ENCODE measurements at regions of chr11 and their contacts with region 1.

Region 1: DNA sequence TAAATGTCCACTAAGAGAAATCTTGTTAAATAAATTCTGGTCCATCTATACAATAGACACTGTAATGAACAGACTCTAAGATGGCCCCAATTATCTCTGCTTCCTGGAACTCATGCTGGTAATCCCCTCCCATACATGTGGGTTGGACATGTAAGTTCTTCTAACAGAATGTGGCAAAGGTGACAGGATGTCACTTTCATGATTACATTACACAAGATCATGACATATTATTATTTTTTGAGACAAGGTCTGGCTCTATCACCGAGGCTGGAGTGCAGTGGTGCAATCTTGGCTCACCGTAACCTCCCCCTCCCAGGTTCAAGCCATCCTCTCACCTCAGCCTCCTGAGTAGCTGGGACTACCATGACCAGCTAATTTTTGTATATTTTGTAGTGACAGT is 14.6 kb upstream of the NDUFC2 start:
- DNase-seq: no peak
- H3K4me3 ChIP-seq: no peak overlapping the region
- H3K4me3 Mint-ChIP-seq: no peak overlapping the region
- H3K27ac Mint-ChIP-seq: no peak overlapping the region
- H3K4me1 ChIP-seq: peaks cover 21% of the 10 kb centered on the region
- H3K4me1 Mint-ChIP-seq: peaks cover 32% of the 10 kb centered on the region
- H3K27me3 ChIP-seq: no peaks in the 10 kb centered on the region
- H3K27me3 Mint-ChIP-seq: no peaks in the 10 kb centered on the region
- CTCF ChIP-seq: no peak

Region 2: GRCh38 chr11:77800449-77800848 is 293.8 kb before region 1 on chr11:
- CTCF ChIA-PET with region 1: no interaction called
- POLR2A ChIA-PET with region 1: no interaction called
- intact Hi-C with region 1: loop called (anchors 1 kb)
- DNase-seq: no peak
- H3K4me3 ChIP-seq: no peak overlapping the region
- H3K4me3 Mint-ChIP-seq: peak overlapping the region; percentile 64
- H3K27ac Mint-ChIP-seq: peak overlapping the region; percentile 94
- H3K4me1 ChIP-seq: peaks cover 39% of the 10 kb centered on the region
- H3K4me1 Mint-ChIP-seq: peaks cover 34% of the 10 kb centered on the region
- H3K27me3 ChIP-seq: no peaks in the 10 kb centered on the region
- H3K27me3 Mint-ChIP-seq: no peaks in the 10 kb centered on the region
- CTCF ChIP-seq: no peak

Region 3: GRCh38 chr11:77865805-77866204 is 228.4 kb before region 1 on chr11:
- CTCF ChIA-PET with region 1: no interaction called
- POLR2A ChIA-PET with region 1: no interaction called
- intact Hi-C with region 1: no loop called
- DNase-seq: no peak
- H3K4me3 ChIP-seq: no peak overlapping the region
- H3K4me3 Mint-ChIP-seq: no peak overlapping the region
- H3K27ac Mint-ChIP-seq: no peak overlapping the region
- H3K4me1 ChIP-seq: no peaks in the 10 kb centered on the region
- H3K4me1 Mint-ChIP-seq: no peaks in the 10 kb centered on the region
- H3K27me3 ChIP-seq: no peaks in the 10 kb centered on the region
- H3K27me3 Mint-ChIP-seq: no peaks in the 10 kb centered on the region
- CTCF ChIP-seq: no peak

Region 4: GRCh38 chr11:78045851-78046485 is 48.3 kb before region 1 on chr11:
- CTCF ChIA-PET with region 1: interaction called, 10 read pairs
- POLR2A ChIA-PET with region 1: interaction called, 4 read pairs
- intact Hi-C with region 1: loop called (anchors 1 kb)
- DNase-seq: peak; percentile 80 to 97
- H3K4me3 ChIP-seq: peak overlapping the region; percentile 28
- H3K4me3 Mint-ChIP-seq: peak overlapping the region; percentile 75
- H3K27ac Mint-ChIP-seq: peak overlapping the region; percentile 1
- H3K4me1 ChIP-seq: peaks cover 15% of the 10 kb centered on the region
- H3K4me1 Mint-ChIP-seq: peaks cover 23% of the 10 kb centered on the region
- H3K27me3 ChIP-seq: no peaks in the 10 kb centered on the region
- H3K27me3 Mint-ChIP-seq: no peaks in the 10 kb centered on the region
- CTCF ChIP-seq: peak; percentile 99

Region 5: DNA sequence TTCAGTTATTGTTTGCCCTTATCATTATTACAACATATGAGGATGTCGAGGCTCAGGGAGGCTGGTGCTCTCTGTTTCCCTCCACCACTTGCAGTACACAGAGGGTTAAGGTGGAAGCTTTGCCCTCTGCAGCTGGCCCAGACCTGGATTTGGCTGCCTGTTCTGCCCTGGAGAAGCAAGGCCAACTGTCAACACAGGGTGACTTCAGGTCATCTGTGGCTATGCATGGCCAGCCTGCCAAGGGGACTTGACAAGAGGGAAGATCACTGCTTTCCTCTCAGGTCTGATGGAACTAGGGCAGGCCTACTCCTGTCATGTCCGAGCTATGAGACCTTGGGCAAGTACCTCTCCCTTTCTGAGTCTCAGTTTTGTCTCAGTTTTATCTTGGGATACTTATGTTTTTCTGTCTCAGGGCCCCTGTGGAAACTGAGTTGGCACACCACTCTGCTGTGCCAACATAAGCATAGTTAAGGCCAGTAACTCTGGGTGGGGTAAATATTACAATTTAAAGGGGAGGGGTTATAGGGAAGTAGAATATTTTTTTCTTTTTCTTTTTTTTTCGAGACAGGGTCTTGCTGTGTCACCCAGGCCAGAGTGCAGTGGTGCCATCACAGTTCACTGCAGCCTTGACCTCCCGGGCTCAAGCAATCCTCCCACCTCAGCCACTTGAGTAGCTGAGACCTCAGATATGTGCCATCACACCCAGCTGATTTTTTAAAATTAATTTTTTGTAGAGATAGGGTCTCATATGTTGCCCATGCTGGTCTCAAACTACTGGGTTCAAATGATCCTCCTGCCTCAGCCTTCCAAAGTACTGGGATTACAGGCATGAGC is 32.9 kb before region 1 on chr11:
- CTCF ChIA-PET with region 1: interaction called, 3 read pairs
- POLR2A ChIA-PET with region 1: no interaction called
- intact Hi-C with region 1: loop called (anchors 1 kb)
- DNase-seq: peak; percentile 52 to 65
- H3K4me3 ChIP-seq: no peak overlapping the region
- H3K4me3 Mint-ChIP-seq: no peak overlapping the region
- H3K27ac Mint-ChIP-seq: peak overlapping the region; percentile 70
- H3K4me1 ChIP-seq: peaks cover 31% of the 10 kb centered on the region
- H3K4me1 Mint-ChIP-seq: peaks cover 15% of the 10 kb centered on the region
- H3K27me3 ChIP-seq: no peaks in the 10 kb centered on the region
- H3K27me3 Mint-ChIP-seq: no peaks in the 10 kb centered on the region
- CTCF ChIP-seq: no peak

Region 6: GRCh38 chr11:78127401-78127800 is 33.2 kb after region 1 on chr11:
- CTCF ChIA-PET with region 1: no interaction called
- POLR2A ChIA-PET with region 1: no interaction called
- intact Hi-C with region 1: loop called (anchors 2 kb)
- DNase-seq: no peak
- H3K4me3 ChIP-seq: no peak overlapping the region
- H3K4me3 Mint-ChIP-seq: no peak overlapping the region
- H3K27ac Mint-ChIP-seq: no peak overlapping the region
- H3K4me1 ChIP-seq: peaks cover 7% of the 10 kb centered on the region; the same call in 1 of the 2 replicates
- H3K4me1 Mint-ChIP-seq: peaks cover 6% of the 10 kb centered on the region
- H3K27me3 ChIP-seq: no peaks in the 10 kb centered on the region
- H3K27me3 Mint-ChIP-seq: no peaks in the 10 kb centered on the region
- CTCF ChIP-seq: no peak

Region 7: DNA sequence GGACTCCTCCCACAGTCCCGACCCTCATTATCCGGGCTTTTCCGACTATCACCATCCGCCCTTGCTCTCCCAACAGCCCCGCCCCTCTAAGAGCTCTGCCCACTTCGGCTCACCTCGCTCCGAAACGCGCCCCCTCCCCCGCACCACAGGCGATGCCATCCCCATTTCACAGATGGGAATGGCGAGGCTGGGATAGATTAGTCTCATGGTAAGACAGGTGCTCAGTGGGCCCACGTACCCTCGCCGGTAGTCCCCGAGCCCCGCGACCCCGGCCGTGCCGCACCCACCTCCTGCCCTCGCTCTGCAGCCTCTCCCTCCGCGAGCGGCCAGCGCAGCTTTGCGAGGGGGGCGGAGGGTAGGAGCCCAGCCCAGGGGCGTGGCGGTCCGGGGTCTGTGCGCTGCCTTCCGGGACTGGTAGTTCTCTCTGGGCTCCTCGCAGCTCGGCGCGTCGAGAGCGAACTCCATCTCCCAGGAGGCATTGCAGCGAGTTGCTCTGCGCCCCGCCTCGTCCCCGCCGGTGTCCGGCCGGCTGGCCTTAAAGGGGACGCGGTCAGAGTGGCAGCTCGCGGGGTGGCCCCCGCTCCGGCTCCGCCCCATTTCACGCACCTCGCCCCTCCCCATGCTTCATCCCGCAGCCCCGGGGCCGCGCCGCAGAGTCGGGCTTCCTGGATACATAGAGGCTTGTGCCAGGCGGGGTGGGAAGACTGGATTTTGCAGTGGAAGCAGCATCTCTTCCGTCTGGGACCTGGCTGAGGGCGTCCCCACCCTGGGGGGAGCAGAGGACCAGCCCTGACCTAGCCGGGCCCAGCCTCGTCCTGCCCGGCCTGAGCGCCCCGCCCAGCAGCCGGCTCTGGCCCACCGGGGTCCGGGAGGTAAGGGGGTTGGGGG is 94.3 kb after region 1 on chr11 and contains the starts of genes KCTD21 and USP35:
- CTCF ChIA-PET with region 1: interaction called, 5 read pairs
- POLR2A ChIA-PET with region 1: no interaction called
- intact Hi-C with region 1: loop called (anchors 1 kb)
- DNase-seq: peak; percentile 99 to 100
- H3K4me3 ChIP-seq: peak within 1 kb of the TSS; percentile 82
- H3K4me3 Mint-ChIP-seq: peak within 1 kb of the TSS; percentile 98
- H3K27ac Mint-ChIP-seq: peak within 1 kb of the TSS; percentile 84
- H3K4me1 ChIP-seq: peaks cover 28% of the 10 kb centered on the region
- H3K4me1 Mint-ChIP-seq: peaks cover 37% of the 10 kb centered on the region
- H3K27me3 ChIP-seq: no peaks in the 10 kb centered on the region
- H3K27me3 Mint-ChIP-seq: no peaks in the 10 kb centered on the region
- CTCF ChIP-seq: no peak
- total RNA-seq, gene KCTD21: 6.4 and 10.4 TPM in 2 replicates
- total RNA-seq, gene USP35: 10.7 and 11.3 TPM in 2 replicates

Region 8: DNA sequence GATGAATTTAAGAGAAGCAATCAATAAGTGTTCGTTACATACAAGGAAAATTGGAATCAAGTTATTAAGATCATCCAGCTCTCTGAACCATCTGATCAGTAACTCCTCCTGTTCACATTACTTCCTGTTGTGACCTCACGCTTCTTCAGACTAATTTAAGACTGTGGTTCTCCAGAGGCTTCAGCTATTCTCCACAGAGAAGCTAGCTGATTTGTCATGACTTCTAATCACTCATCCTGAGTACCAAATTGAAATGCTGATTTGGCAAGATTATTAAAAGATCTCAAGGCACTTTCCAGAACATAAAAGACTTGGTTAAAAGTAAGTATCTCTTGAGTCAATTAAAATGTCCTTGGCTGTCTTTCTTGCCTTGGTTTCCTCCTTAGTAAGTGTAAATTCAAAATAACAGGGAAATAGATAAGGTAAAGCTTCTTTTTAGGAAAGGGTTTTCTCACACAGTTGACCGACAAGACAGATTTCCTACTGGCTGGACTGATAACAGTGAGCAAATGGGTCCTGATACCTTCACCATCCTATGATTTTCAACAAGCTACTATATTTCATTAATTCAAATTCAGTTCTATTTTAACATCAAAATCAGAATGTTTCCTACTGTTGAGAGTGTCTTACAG is 284.9 kb after region 1 on chr11:
- CTCF ChIA-PET with region 1: no interaction called
- POLR2A ChIA-PET with region 1: no interaction called
- intact Hi-C with region 1: no loop called
- DNase-seq: no peak
- H3K4me3 ChIP-seq: no peak overlapping the region
- H3K4me3 Mint-ChIP-seq: peak overlapping the region; percentile 64
- H3K27ac Mint-ChIP-seq: peak overlapping the region; percentile 93
- H3K4me1 ChIP-seq: peaks cover 75% of the 10 kb centered on the region
- H3K4me1 Mint-ChIP-seq: peaks cover 60% of the 10 kb centered on the region
- H3K27me3 ChIP-seq: no peaks in the 10 kb centered on the region
- H3K27me3 Mint-ChIP-seq: no peaks in the 10 kb centered on the region
- CTCF ChIP-seq: no peak

Region 9: GRCh38 chr11:78586452-78587046 is 492.3 kb after region 1 on chr11:
- CTCF ChIA-PET with region 1: no interaction called
- POLR2A ChIA-PET with region 1: no interaction called
- intact Hi-C with region 1: no loop called
- DNase-seq: no peak
- H3K4me3 ChIP-seq: no peak overlapping the region
- H3K4me3 Mint-ChIP-seq: no peak overlapping the region
- H3K27ac Mint-ChIP-seq: no peak overlapping the region
- H3K4me1 ChIP-seq: peaks cover 7% of the 10 kb centered on the region
- H3K4me1 Mint-ChIP-seq: peaks cover 18% of the 10 kb centered on the region
- H3K27me3 ChIP-seq: no peaks in the 10 kb centered on the region
- H3K27me3 Mint-ChIP-seq: no peaks in the 10 kb centered on the region
- CTCF ChIP-seq: peak; percentile 51 to 85

Region 10: GRCh38 chr11:78666675-78667160 is 572.5 kb after region 1 on chr11:
- CTCF ChIA-PET with region 1: no interaction called
- POLR2A ChIA-PET with region 1: no interaction called
- intact Hi-C with region 1: no loop called
- DNase-seq: no peak
- H3K4me3 ChIP-seq: no peak overlapping the region
- H3K4me3 Mint-ChIP-seq: no peak overlapping the region
- H3K27ac Mint-ChIP-seq: no peak overlapping the region
- H3K4me1 ChIP-seq: no peaks in the 10 kb centered on the region
- H3K4me1 Mint-ChIP-seq: no peaks in the 10 kb centered on the region
- H3K27me3 ChIP-seq: no peaks in the 10 kb centered on the region
- H3K27me3 Mint-ChIP-seq: peaks cover 10% of the 10 kb centered on the region
- CTCF ChIP-seq: no peak

Measured in Caco-2 (cell line).